Psoas muscle (tissue), 8 donors: ENCODE measurements at regions of chr16 and their contacts with region 1.

Region 1: DNA sequence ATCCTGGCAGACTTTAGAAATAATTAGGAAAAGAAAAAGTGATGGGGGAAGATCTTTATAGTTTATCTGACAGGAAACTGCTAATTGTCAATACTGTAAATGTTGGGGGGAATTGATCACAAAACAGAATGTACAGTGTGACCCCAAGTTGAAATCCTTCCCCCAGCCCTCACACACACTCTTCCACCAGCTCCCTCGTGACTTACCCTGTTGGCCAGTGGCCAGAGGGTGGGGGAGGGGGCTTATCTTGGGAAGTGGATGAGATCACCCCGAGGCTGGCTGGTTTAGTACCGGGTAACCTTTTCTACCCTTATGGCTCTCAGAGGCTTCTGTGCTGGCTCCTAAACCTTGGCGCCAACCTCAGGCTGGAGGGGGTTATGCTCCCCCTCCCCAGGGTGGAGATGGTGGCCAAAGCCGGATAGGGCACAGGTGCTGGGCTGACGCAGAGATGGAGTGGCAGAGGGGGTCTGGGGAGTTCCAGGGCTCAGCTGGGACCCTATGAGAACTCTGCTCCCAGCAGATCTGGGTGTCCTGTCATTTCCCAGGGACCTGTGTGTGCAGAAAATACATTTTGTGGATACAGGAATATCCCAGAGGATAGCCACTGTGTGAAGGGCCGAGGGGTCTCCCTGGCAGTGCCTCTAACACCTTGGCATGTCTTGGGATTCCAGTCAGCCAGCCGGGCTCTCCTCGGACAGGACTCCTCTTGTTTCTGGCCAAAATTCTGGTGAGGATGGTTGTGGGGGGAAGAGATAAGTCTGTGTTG is 18.6 kb downstream of the CDH16 start:
- DNase-seq: peak; percentile 86 to 90
- ATAC-seq: peak; percentile 39 to 70 (median 50)
- H3K4me3 ChIP-seq: no peak overlapping the region
- H3K27ac ChIP-seq: peak overlapping the region; percentile 89
- H3K4me1 ChIP-seq: peaks cover 57% of the 10 kb centered on the region
- H3K27me3 ChIP-seq: no peaks in the 10 kb centered on the region
- CTCF ChIP-seq: no peak

Region 2: DNA sequence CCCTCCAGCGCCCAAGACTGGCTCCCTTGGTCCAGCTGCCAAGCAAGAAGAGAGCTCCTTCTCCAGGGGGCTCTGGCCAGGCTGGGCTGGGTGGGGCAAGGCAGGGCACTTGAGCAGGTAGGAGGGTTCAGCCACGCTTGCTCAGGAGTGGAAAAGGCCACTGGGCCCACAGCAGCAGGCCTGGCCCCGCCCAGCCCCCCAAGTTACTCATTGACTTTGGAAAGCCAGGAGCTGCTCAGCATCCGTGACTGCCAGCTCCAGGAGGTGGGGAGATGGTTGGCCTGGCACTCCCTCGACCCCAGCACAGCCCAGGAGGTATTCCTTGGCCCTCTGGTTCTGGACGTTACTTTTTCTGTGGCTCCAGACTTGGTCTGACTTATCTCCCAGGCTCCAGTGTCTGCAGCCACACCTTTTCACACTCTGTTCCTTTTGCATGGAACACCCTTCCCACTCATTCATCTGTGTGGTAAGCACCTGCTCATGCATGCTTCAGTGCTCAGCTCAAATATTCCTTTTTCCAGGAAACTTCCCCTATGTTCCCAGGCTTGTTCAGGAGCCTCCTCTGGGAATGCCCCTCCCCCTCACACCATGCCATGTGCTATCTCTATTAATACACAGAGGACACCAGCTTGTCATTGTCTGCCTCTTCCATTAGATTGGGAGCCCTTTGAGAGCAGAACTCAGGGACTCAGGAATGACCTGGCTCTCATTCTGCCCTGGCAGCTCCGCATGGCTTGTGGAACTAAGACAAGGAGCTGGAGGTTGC is 18.9 kb after region 1 on chr16 and contains the start of gene CDH16:
- intact Hi-C with region 1: loop called in 1 of 2 experiments (anchors 2 kb)
- DNase-seq: no peak
- ATAC-seq: peak; percentile 10 to 41 (median 18)
- H3K4me3 ChIP-seq: no peak within 1 kb of the TSS
- H3K27ac ChIP-seq: peak within 1 kb of the TSS; percentile 77
- H3K4me1 ChIP-seq: no peaks in the 10 kb centered on the region
- H3K27me3 ChIP-seq: no peaks in the 10 kb centered on the region
- CTCF ChIP-seq: no peak
- total RNA-seq, gene CDH16: 0.53 to 3.3 TPM in 2 of 4 donors, not detected in the others

Region 3: DNA sequence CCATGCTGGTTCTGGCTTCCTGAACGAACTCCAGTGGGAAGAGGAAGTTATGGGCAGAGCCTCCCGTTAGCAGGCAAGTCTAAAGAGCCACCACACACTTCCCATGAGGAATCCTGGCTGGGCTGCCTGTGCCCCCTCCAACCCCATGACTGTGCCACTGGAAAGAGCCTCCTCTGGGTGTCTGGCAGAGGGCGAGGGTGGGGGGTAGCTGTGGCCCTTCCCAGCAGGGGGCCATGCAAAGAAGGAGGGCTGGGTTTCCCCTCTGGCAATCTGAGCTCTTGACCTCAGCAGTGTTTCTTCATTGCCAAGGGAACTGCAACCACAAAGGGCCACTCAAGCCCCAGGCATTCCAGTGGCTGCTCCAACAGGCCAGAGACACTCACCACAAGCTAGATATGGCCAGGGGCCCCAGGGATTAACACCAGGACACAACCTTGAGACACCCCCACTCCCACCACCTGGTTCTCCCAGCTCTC is 26.9 kb after region 1 on chr16:
- intact Hi-C with region 1: loop called (anchors 2 to 5 kb)
- DNase-seq: peak in 1 of 2 donors; percentile 73
- ATAC-seq: peak; percentile 3 to 46 (median 36)
- H3K4me3 ChIP-seq: peak overlapping the region; percentile 67
- H3K27ac ChIP-seq: peak overlapping the region; percentile 96
- H3K4me1 ChIP-seq: peaks cover 42% of the 10 kb centered on the region
- H3K27me3 ChIP-seq: no peaks in the 10 kb centered on the region
- CTCF ChIP-seq: no peak

Region 4: DNA sequence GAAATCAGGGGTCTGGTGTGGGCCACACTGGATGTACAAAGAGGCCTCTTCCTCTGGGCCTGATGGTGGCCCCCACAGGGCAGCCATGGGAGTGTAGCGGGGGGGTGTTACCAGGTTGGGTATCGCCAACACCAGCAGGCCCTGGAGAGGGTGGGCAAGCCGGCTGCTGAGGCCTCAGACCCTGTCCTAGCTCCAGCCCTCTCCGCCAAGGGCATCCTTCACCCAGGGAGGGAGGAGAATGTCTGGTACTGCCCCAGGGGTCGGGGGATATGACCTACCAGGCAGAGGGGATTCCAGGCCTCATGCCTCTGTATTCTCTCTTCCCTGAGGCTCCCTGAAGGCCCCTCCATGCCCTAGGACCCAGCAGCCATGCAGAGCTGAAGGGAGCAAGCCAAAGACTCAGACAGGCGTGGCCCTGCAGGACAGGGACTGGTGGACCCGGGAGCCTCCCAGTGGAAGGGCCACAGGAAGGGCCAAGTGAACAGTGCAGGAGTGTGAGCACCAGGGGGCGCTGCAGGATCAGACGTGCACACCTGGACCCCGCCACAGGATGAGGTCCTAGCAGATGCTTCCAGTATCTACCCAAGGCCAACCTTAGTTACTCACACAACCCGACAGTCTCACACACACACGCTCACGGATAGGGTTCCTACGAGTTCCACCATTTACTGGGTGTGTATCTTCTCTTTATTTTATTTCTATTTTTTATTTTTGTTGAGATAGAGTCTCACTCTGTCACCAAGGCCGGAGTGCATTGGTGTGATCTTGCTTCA is 77.4 kb after region 1 on chr16:
- intact Hi-C with region 1: no loop called
- DNase-seq: peak; percentile 92 to 94
- ATAC-seq: peak; percentile 93 to 98 (median 96)
- H3K4me3 ChIP-seq: no peak overlapping the region
- H3K27ac ChIP-seq: no peak overlapping the region
- H3K4me1 ChIP-seq: no peaks in the 10 kb centered on the region
- H3K27me3 ChIP-seq: no peaks in the 10 kb centered on the region
- CTCF ChIP-seq: peak; percentile 98